ENCODE measurements at regions of chr6 and their contacts with region 1.

Region 1: GRCh38 chr6:36094753-36095496 is 35.4 kb upstream of the MAPK13 start:
- DNase-seq: no peak
- H3K4me3 ChIP-seq: no peak overlapping the region
- H3K27me3 ChIP-seq: no peaks in the 10 kb centered on the region
- CTCF ChIP-seq: peak; percentile 93

Region 2: DNA sequence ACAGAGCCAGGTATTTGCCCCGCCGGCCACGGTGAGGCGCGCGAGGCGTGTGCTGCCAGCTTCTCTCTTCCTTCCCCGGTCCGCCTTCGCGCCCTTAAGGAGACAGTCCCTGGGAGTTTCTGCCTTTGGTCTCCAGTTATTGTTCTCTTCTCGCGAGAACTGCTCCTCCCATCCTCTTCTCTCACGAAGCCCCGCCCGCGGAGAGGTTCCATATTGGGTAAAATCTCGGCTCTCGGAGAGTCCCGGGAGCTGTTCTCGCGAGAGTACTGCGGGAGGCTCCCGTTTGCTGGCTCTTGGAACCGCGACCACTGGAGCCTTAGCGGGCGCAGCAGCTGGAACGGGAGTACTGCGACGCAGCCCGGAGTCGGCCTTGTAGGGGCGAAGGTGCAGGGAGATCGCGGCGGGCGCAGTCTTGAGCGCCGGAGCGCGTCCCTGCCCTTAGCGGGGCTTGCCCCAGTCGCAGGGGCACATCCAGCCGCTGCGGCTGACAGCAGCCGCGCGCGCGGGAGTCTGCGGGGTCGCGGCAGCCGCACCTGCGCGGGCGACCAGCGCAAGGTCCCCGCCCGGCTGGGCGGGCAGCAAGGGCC is 67.3 kb before region 1 on chr6 and contains the start of gene MAPK14:
- CTCF ChIA-PET with region 1: interaction called, 117 read pairs
- POLR2A ChIA-PET with region 1: interaction called, 3 read pairs
- DNase-seq: peak; percentile 96
- H3K4me3 ChIP-seq: peak within 1 kb of the TSS; percentile 91
- H3K27me3 ChIP-seq: no peaks in the 10 kb centered on the region
- CTCF ChIP-seq: peak; percentile 89
- polyA plus RNA-seq, gene MAPK14: 33.9 and 53.0 TPM in 2 replicates

Region 3: DNA sequence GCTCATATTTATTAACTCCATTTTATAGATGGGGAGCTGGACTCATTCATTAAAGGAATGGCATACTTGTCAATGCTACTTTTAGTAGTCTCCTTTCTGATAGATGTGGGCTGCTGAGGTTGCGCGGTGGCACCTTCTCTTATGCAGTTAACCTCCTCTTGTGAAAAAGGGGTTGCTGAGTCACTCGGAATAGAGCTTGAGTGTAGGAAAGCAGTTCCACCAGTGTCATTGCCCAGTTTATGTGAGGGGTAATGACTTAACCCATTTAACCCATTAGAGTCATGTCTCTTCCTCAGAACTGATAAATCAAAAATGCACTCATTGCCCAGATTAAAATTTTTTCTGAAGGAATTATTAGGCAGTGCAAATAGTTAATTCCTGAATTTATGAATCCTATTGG is 61.0 kb before region 1 on chr6:
- CTCF ChIA-PET with region 1: interaction called, 117 read pairs
- POLR2A ChIA-PET with region 1: interaction called, 3 read pairs
- DNase-seq: no peak
- H3K4me3 ChIP-seq: no peak overlapping the region
- H3K27me3 ChIP-seq: no peaks in the 10 kb centered on the region
- CTCF ChIP-seq: no peak

Region 4: DNA sequence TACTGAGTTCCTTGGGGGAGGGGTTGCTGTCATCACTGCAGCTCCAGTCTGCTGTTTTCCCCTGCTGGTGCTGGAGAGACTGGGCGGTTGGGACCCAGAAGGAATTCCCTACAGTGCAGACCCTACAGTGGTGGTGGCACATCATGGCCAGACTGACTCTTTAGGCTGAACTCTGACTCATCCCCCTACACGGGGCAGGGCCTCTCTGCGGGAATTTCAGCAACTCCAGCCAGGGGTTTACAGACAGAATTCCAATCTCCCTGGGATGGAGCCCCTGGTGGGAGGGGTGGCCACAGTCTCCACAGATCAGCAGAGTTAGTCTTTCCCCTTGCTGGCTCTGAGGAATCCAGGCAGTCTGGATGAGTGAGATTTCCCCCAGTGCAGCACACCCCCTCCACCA is 11.5 kb before region 1 on chr6:
- CTCF ChIA-PET with region 1: interaction called, 35 read pairs
- POLR2A ChIA-PET with region 1: no interaction called
- DNase-seq: no peak
- H3K4me3 ChIP-seq: no peak overlapping the region
- H3K27me3 ChIP-seq: no peaks in the 10 kb centered on the region
- CTCF ChIP-seq: no peak

Region 5: DNA sequence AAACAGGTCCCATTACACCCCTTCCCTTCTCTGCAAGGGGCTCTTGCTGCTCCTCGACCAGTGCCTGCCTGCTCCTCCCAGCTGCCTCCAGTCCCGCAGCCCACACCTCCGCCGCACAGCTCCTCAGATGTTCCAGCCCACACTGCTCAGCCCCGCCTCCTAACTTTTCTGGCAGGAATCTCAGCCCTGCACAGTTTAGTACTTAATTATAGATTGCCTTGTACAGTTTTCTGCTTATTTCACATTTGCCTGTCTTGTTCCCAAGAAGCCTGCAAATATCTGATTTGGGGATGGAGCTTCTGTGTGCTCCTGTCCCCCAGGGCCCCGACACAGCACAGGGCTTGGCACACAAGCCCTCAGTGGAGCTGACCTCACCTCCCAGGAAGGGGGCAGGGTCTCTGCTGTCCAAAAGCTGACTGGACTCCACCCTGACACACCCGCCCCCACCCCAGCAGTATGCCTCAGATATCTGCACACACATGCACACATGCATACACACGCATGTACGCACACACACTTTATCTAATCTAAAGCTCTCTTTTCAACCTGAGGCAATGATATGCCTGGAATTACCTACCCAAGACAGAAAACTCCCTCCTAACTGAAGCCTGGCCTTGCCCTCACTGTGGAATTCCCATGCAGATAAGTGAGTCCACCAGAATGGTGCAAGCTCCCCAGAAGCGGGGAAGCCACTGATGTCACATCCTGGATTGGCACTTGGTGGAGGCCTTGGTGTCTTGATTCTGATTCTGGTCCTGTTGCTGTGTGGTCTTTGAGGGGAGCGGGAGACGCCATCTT is 173.8 kb after region 1 on chr6:
- CTCF ChIA-PET with region 1: no interaction called
- POLR2A ChIA-PET with region 1: no interaction called
- DNase-seq: no peak
- H3K4me3 ChIP-seq: no peak overlapping the region
- H3K27me3 ChIP-seq: peaks cover 14% of the 10 kb centered on the region
- CTCF ChIP-seq: no peak

Region 6: GRCh38 chr6:36423101-36423824 is 328.3 kb after region 1 on chr6:
- CTCF ChIA-PET with region 1: no interaction called
- POLR2A ChIA-PET with region 1: no interaction called
- DNase-seq: peak; percentile 85
- H3K4me3 ChIP-seq: peak overlapping the region; percentile 47
- H3K27me3 ChIP-seq: no peaks in the 10 kb centered on the region
- CTCF ChIP-seq: peak; percentile 83

Measured in BJ (cell line).